ENCODE measurements at regions of chr17 and their contacts with region 1.

Region 1: DNA sequence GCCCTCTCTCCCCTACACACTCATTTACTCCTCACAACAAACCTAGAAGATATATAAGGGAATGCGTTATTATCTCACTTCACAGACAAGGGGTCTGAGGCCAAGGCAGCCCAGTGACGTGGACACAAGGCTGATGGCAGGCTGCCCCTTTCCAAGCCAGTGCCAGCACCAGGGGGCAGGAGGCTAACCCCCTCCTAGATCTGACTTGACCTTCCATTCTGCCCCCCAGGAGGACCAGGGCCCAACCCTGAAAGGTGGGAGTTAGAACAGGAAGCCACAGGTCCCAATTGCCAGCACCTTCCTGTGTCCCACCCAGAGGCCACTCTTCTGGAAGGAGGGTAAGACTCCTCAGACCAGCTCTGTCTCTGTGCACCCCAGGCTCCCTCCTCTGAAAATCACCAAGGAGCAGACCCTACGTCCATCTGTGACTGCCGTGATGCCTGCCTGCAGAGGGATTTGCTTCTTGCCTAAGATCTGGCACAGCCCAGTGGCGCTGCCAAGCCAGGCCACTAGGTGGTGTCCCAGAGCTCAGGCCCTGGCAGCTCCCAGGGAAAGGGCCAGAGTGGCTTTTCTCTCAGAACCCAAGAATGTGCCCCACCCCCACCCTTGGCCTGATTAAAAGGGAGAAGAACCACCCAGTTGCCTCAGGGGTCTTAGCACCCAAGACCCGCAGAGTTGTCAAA is 42.4 kb upstream of the MRPS23 start:
- DNase-seq: peak; percentile 77 to 81 (median 79)
- H3K4me3 ChIP-seq: peak overlapping the region in 1 of 3 experiments; percentile 72
- H3K4me3 Mint-ChIP-seq: peak overlapping the region; percentile 88 to 99
- H3K27ac ChIP-seq: peak overlapping the region; percentile 94
- H3K27ac Mint-ChIP-seq: peak overlapping the region; percentile 97 to 99 (median 99)
- H3K4me1 ChIP-seq: peaks cover 65 to 66% of the 10 kb centered on the region in 2 donors
- H3K4me1 Mint-ChIP-seq: peaks cover 69% of the 10 kb centered on the region
- H3K27me3 ChIP-seq: no peaks in the 10 kb centered on the region
- H3K27me3 Mint-ChIP-seq: peaks cover 0 to 2% (median 1%) of the 10 kb centered on the region in 3 donors
- CTCF ChIP-seq: peak; percentile 99

Region 2: DNA sequence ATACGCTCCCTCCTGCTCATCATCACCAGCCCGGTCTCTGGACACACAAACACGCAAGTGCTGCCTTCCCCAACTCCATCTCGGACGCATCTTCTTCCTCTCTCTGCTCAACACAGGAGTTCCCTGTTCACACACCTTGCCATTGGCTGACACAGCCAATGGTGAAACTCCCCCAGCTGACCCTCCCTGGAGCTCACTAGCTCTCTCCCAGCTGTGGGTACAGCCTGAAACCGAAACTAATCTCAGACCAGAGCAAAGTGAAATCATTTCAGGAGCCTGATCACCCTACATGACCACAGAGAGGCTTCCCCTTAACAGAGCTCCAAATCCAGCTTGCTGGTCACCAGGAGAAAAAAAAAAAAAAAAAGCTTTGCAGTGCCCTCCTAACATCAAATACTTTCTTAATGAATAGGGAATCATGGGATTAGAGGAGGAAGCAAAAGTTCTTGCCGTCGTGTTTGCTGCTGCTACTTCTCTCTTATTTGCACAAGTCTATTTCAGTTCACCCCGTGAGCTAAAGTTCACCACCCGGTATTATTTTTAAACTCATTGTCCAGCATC is 54.6 kb after region 1 on chr17:
- intact Hi-C with region 1: loop called in 1 of 2 experiments (anchors 2 kb)
- DNase-seq: peak; percentile 87 to 97 (median 91)
- H3K4me3 ChIP-seq: peak overlapping the region; percentile 3 to 74 (median 28)
- H3K4me3 Mint-ChIP-seq: peak overlapping the region; percentile 75 to 92
- H3K27ac ChIP-seq: peak overlapping the region; percentile 62 to 87
- H3K27ac Mint-ChIP-seq: peak overlapping the region; percentile 91 to 95 (median 92)
- H3K4me1 ChIP-seq: peaks cover 76 to 87% of the 10 kb centered on the region in 2 donors
- H3K4me1 Mint-ChIP-seq: peaks cover 73% of the 10 kb centered on the region
- H3K27me3 ChIP-seq: no peaks in the 10 kb centered on the region
- H3K27me3 Mint-ChIP-seq: peaks cover 0 to 4% (median 4%) of the 10 kb centered on the region in 3 donors
- CTCF ChIP-seq: no peak

Region 3: GRCh38 chr17:57955183-57955931 is 63.1 kb after region 1 on chr17 and contains the start of gene CUEDC1:
- intact Hi-C with region 1: loop called in 1 of 2 experiments (anchors 5 kb)
- DNase-seq: peak; percentile 47 to 69 (median 66)
- H3K4me3 ChIP-seq: peak within 1 kb of the TSS; percentile 57 to 83 (median 72)
- H3K4me3 Mint-ChIP-seq: peak within 1 kb of the TSS; percentile 73 to 89
- H3K27ac ChIP-seq: peak within 1 kb of the TSS in 1 of 2 donors; percentile 51
- H3K27ac Mint-ChIP-seq: peak within 1 kb of the TSS in 4 of 7 donors; percentile 31 to 63 (median 44)
- H3K4me1 ChIP-seq: peaks cover 38 to 53% of the 10 kb centered on the region in 2 donors
- H3K4me1 Mint-ChIP-seq: peaks cover 51% of the 10 kb centered on the region
- H3K27me3 ChIP-seq: peaks cover 10 to 31% of the 10 kb centered on the region in 2 donors
- H3K27me3 Mint-ChIP-seq: peaks cover 33 to 47% (median 44%) of the 10 kb centered on the region in 3 donors
- CTCF ChIP-seq: peak; percentile 35
- polyA plus RNA-seq, gene CUEDC1: 4.2 to 31.0 (median 4.3) TPM

Region 4: DNA sequence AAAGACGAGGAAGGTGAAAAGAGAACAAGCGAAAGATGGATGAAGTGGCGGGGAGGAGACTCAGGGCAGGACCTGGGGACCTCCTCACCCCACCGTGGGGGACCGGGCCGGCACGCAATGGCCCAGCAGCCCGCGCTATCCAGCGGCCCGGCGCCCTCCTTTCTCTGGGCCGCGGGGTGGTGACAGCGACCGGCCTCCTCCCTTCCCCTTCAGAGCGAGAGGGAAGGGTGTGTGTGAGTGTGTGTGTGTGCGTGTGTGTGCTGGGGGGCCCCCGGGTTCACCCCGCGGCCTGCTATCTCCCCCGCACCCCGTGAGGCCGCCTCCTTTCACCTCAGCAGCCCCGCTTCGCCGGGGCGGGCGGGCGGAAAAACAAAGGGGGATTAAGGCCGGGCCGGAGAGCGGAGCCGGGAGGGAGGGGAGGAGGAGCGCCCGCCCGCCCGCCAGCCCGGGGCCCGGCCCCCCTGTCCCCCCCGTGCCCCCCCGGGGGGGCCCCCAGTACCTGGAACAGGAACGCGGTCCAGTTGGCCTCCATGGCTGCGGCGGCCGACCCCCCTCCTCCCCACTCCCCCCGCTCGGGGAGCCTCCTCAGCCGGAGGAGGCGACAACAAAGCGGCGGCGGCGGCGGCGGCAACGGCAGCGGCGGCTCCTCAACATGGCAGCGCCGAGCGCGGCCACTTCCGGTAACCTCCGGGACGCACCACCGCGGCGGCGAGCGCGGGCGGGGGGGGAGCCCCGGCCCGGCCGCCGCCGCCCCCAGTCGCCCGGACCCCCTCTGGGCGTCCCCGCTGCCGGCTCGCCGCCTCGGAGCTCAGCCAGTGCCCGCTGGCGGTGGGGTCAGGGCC is 95.5 kb after region 1 on chr17 and contains the start of gene VEZF1:
- intact Hi-C with region 1: loop called (anchors 2 to 5 kb)
- DNase-seq: peak; percentile 64 to 73 (median 69)
- H3K4me3 ChIP-seq: peak within 1 kb of the TSS; percentile 80 to 92 (median 91)
- H3K4me3 Mint-ChIP-seq: peak within 1 kb of the TSS; percentile 95 to 96
- H3K27ac ChIP-seq: peak within 1 kb of the TSS; percentile 79 to 92
- H3K27ac Mint-ChIP-seq: peak within 1 kb of the TSS; percentile 90 to 97 (median 95)
- H3K4me1 ChIP-seq: peaks cover 33 to 53% of the 10 kb centered on the region in 2 donors
- H3K4me1 Mint-ChIP-seq: peaks cover 55% of the 10 kb centered on the region
- H3K27me3 ChIP-seq: no peaks in the 10 kb centered on the region
- H3K27me3 Mint-ChIP-seq: peaks cover 0 to 2% (median 0%) of the 10 kb centered on the region in 3 donors
- CTCF ChIP-seq: no peak
- polyA plus RNA-seq, gene VEZF1: 28.3 to 40.1 (median 29.0) TPM

Measured in CD14-positive monocyte (primary cell).